ENCODE measurements at regions of chr3 and their contacts with region 1.

Region 1: DNA sequence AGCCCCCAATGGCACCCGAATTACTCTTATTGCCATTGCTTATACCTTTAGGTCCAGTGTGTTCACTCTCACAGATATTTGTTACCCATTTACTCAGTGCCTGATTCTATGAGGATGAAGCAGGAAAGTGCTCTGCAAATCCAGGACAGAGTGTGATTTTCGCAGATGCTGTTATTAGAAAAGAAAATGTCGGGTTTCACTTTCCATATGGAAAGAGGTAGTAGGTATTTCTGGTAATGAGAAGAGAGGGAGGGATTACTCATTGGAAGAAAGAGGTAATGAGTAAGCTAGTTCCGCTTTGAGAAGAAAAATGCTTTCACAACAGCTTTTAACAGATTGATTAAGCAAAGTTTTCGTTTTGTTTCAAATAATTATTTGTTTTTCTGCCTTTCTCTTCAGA is 336.3 kb upstream of the CFAP20DC start:
- DNase-seq: no peak
- H3K4me3 Mint-ChIP-seq: no peak overlapping the region
- H3K27ac Mint-ChIP-seq: peak overlapping the region; percentile 89
- H3K4me1 Mint-ChIP-seq: peaks cover 84% of the 10 kb centered on the region
- H3K27me3 Mint-ChIP-seq: no peaks in the 10 kb centered on the region

Region 2: DNA sequence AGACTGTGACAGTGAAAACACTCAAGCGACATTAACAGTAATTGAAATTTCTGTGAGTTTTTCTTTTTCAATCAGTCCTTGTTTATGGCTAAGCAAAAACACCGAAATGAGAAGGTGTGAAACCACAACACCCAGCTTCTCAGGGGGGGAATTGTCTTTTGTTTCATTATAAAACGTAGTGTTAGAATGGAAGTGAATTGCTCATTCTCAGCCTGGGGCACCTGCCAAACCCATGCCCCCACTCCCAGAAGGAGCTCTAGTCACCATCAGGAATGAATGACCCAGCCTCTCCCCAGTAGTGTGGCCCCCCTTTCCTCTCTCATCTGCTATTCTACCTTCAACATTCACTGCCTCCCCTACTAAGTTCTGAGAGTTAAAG is 150.5 kb before region 1 on chr3:
- intact Hi-C with region 1: loop called (anchors 5 kb)
- DNase-seq: no peak
- H3K4me3 Mint-ChIP-seq: no peak overlapping the region
- H3K27ac Mint-ChIP-seq: no peak overlapping the region
- H3K4me1 Mint-ChIP-seq: peaks cover 11% of the 10 kb centered on the region
- H3K27me3 Mint-ChIP-seq: peaks cover 8% of the 10 kb centered on the region

Region 3: GRCh38 chr3:59320080-59320479 is 66.1 kb before region 1 on chr3:
- intact Hi-C with region 1: no loop called
- DNase-seq: no peak
- H3K4me3 Mint-ChIP-seq: no peak overlapping the region
- H3K27ac Mint-ChIP-seq: no peak overlapping the region
- H3K4me1 Mint-ChIP-seq: peaks cover 4% of the 10 kb centered on the region
- H3K27me3 Mint-ChIP-seq: no peaks in the 10 kb centered on the region

Region 4: DNA sequence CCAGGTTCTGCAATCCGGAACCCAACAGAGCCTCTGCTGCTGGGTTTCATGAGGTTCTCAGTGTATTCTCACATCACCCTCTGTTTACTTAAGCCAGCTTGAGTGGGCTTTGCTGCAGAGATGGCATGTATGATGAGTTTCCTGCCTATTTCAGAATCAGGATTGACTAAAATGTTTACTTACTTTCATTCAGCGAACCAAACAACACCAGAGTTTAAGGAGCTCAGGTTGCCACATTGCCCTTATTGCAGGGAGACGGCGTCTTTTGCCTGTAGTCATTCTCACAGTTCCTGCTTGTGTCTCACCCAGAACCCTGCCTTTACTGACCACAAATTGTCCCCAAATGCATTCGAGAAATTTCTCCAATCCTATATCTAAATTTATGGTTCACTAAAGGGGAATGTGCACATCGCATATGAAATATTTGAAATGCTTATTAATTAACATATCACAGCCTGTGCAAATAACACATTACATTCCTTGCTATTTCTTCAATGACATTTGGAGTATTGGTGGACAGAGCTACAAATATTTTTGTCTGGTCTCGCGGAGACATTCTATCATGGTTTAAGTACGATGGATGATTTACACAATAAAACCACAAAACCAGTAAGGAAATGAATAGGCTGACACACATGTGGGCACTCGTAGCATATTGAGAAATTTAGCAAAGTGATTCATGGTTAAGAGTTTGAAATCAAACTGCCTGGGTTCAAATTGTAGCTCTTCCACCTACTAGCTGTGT is 40.8 kb after region 1 on chr3:
- intact Hi-C with region 1: loop called (anchors 1 kb)
- DNase-seq: no peak
- H3K4me3 Mint-ChIP-seq: no peak overlapping the region
- H3K27ac Mint-ChIP-seq: peak overlapping the region; percentile 46
- H3K4me1 Mint-ChIP-seq: peaks cover 46% of the 10 kb centered on the region
- H3K27me3 Mint-ChIP-seq: no peaks in the 10 kb centered on the region

Region 5: DNA sequence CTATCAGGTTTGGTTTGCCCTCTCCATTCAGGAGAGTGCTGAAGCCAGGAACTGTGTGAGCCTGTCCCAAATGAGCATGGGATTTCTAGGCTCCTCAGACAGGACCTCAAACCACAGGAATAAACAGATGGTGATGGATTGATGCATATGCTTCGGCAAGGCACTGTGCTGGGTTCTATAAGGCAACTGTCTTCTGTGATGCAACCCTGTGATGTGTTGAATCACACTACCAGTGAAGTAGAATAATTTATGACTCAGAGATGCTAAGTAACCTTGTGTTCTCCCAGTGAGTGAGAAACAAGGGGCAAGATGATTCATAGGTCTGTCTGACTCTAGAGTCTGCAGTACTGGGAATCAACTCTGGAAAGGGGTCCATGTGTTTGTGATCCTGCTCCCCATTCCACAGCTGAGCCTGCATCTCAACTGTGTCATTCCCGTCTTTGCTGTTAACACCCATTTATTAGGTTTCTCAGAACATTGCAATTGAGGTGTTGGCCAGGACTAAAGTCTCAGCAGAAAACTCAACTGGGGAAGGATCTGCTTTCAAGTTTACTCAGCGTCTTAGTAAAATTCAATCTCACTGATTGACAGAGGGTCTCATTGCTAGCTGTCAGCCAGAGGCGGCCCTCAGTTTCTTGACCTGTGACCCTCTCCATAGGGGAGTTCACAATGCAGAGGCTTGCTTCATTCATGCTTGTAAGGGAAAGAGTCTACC is 173.7 kb after region 1 on chr3:
- intact Hi-C with region 1: loop called (anchors 2 kb)
- DNase-seq: no peak
- H3K4me3 Mint-ChIP-seq: no peak overlapping the region
- H3K27ac Mint-ChIP-seq: peak overlapping the region; percentile 56
- H3K4me1 Mint-ChIP-seq: peaks cover 20% of the 10 kb centered on the region
- H3K27me3 Mint-ChIP-seq: no peaks in the 10 kb centered on the region

Region 6: DNA sequence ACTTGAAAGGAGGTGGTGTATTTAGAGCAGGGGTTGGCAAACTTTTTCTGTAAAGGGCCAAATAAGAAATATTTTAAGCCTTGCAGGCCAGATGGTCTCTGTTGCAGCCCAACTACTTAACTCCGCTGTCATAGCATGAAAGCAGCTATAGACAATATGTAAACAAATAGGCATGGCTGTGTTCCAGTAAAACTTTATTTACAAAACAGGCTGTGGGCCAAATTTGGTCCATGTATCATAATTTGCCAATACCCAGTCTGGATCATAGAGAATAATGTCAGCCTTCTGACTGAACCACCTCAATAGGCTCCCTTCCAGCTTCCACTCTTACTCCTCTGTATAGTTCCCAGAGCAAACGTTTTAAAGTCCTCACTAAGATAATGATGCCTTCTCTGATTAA is 302.5 kb after region 1 on chr3:
- intact Hi-C with region 1: no loop called
- DNase-seq: no peak
- H3K4me3 Mint-ChIP-seq: no peak overlapping the region
- H3K27ac Mint-ChIP-seq: no peak overlapping the region
- H3K4me1 Mint-ChIP-seq: peaks cover 16% of the 10 kb centered on the region
- H3K27me3 Mint-ChIP-seq: peaks cover 14% of the 10 kb centered on the region

Region 7: DNA sequence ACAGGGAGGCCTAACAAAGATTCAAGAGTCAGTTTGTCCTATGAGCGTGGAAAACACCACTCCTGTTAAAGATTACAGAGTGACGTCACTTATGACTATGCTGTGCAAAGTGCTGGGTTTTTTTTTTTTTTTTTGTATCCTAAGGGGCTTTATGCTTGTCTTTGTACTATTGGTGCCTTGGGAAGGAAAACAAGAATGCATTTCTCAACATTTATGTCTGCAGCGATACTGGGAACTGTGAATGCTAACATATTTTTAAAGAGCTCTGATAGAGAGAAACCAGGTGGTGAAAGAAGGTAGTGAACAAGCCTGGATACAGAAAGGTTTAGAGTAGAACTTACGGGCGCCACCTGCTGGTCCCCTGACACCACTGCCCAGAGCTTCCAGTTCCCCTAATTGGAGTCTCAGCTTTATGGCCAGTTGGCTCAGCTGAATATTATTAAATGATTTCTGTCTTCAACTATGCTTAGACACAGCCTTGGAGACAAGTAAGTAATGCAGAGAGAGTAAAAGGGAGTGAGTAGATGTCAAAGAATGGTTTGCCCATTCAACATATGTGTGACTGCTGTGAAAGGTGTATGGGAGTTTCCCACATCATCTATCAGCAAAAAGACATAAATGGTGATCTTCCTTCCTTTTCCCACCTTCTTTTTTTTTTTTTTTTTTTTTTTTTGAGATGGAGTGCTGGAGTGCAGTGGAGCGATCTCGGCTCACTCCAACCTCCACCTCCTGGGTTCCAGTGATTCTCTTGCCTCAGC is 471.6 kb after region 1 on chr3:
- intact Hi-C with region 1: loop called (anchors 10 kb)
- DNase-seq: peak; percentile 51
- H3K4me3 Mint-ChIP-seq: no peak overlapping the region
- H3K27ac Mint-ChIP-seq: no peak overlapping the region
- H3K4me1 Mint-ChIP-seq: peaks cover 4% of the 10 kb centered on the region
- H3K27me3 Mint-ChIP-seq: no peaks in the 10 kb centered on the region

Region 8: GRCh38 chr3:60555684-60556354 is 1169.7 kb after region 1 on chr3:
- intact Hi-C with region 1: loop called (anchors 10 kb)
- DNase-seq: no peak
- H3K4me3 Mint-ChIP-seq: no peak overlapping the region
- H3K27ac Mint-ChIP-seq: no peak overlapping the region
- H3K4me1 Mint-ChIP-seq: peaks cover 34% of the 10 kb centered on the region
- H3K27me3 Mint-ChIP-seq: no peaks in the 10 kb centered on the region

Measured in activated T-helper 2 cell treated with anti-CD3 and anti-CD28 coated beads, Interferon-gamma antibody, Interleukin-2, Interleukin-4, amounts not matched to agents 10 μg/mL and 5 μg/mL and 100 μg/mL, durations not matched to agents 14 hours and 24 hours and 36 hours (primary cell).